ENCODE measurements at regions of chr1 and their contacts with region 1.

Region 1: GRCh38 chr1:113904674-113905434 is at the starts of genes AP4B1 and DCLRE1B:
- DNase-seq: peak; percentile 100
- H3K4me3 ChIP-seq: peak within 1 kb of the TSS; percentile 86
- H3K27ac ChIP-seq: peak within 1 kb of the TSS; percentile 86
- H3K4me1 ChIP-seq: peaks cover 10% of the 10 kb centered on the region
- H3K27me3 ChIP-seq: no peaks in the 10 kb centered on the region
- CTCF ChIP-seq: peak; percentile 70
- total RNA-seq, gene AP4B1: 42.7 and 48.9 TPM in 2 replicates
- total RNA-seq, gene DCLRE1B: 30.2 and 34.6 TPM in 2 replicates

Region 2: GRCh38 chr1:113835642-113836307 is 69.1 kb before region 1 on chr1:
- CTCF ChIA-PET with region 1: no interaction called
- POLR2A ChIA-PET with region 1: no interaction called
- intact Hi-C with region 1: loop called (anchors 2 kb)
- DNase-seq: peak; percentile 73
- H3K4me3 ChIP-seq: no peak overlapping the region
- H3K27ac ChIP-seq: no peak overlapping the region
- H3K4me1 ChIP-seq: peaks cover 6% of the 10 kb centered on the region
- H3K27me3 ChIP-seq: no peaks in the 10 kb centered on the region
- CTCF ChIP-seq: peak; percentile 72

Region 3: DNA sequence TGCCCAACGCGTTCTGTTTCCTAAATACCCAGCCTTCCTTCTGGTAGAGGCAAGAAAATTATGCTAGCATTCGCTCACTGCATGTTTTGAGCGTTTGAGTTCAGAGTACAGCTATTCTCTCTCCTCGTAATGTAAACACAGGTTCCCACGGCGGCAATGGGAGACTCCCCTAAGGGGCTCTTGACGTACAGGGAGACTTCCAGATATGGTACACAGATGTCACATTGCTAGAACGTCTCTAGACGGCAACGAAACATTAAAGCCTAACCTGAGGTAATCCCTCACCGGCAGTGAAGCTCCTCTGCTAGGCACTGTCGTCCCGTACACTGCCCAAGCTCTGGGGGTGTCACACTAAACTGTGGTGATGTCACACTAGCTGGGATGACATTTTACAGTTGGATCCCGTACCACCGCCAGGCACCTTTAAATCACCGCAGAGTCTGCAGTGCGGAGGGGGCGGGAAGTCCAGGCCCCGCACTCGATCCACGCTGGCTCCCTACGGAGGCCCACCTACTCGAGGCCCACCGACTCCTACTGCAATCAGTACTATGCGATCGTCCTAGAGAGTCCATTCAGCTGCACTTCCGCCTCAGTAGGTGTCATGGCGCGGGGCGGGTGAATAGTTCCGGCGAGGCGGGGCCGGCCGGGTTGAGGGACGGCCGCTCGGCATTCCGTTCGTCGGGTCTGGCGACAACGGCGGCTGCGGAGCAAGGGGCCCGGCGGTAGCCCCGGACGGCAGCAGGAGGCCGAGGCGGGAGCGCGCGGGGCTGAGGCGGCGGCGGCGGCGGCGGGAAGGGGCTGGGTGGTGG is 24.3 kb after region 1 on chr1 and contains the start of gene HIPK1:
- CTCF ChIA-PET with region 1: interaction called, 6 read pairs
- POLR2A ChIA-PET with region 1: no interaction called
- intact Hi-C with region 1: loop called (anchors 1 kb)
- DNase-seq: peak; percentile 95
- H3K4me3 ChIP-seq: peak within 1 kb of the TSS; percentile 96
- H3K27ac ChIP-seq: peak within 1 kb of the TSS; percentile 86
- H3K4me1 ChIP-seq: peaks cover 22% of the 10 kb centered on the region
- H3K27me3 ChIP-seq: no peaks in the 10 kb centered on the region
- CTCF ChIP-seq: no peak
- total RNA-seq, gene HIPK1: 71.8 and 81.3 TPM in 2 replicates

Measured in A673 (cell line).